ENCODE measurements at regions of chr7 and their contacts with region 1.

Region 1: GRCh38 chr7:120272261-120272660 is 714 bp upstream of the KCND2 start:
- ATAC-seq: peak in 7 of 8 experiments; percentile 26 to 67 (median 47)
- H3K4me3 ChIP-seq: peak overlapping the region; percentile 45 to 65 (median 62)
- H3K27ac ChIP-seq: no peak overlapping the region
- H3K4me1 ChIP-seq: peaks cover 0 to 6% of the 10 kb centered on the region in 2 donors

Region 2: GRCh38 chr7:119270045-119270464 is 1002.2 kb before region 1 on chr7:
- in situ Hi-C with region 1: loop called in 1 of 9 experiments (anchors 25 kb)
- ATAC-seq: peak; percentile 58 to 95 (median 77)
- H3K4me3 ChIP-seq: no peak overlapping the region
- H3K27ac ChIP-seq: no peak overlapping the region
- H3K4me1 ChIP-seq: no peaks in the 10 kb centered on the region

Region 3: GRCh38 chr7:119935418-119936025 is 336.7 kb before region 1 on chr7:
- in situ Hi-C with region 1: loop called in 2 of 9 experiments (anchors 25 kb)
- ATAC-seq: peak in 4 of 8 experiments; percentile 33 to 64 (median 39)
- H3K4me3 ChIP-seq: no peak overlapping the region
- H3K27ac ChIP-seq: no peak overlapping the region
- H3K4me1 ChIP-seq: no peaks in the 10 kb centered on the region

Region 4: GRCh38 chr7:120603366-120603765 is 331.1 kb after region 1 on chr7:
- in situ Hi-C with region 1: no loop called
- ATAC-seq: no peak
- H3K4me3 ChIP-seq: no peak overlapping the region
- H3K27ac ChIP-seq: no peak overlapping the region
- H3K4me1 ChIP-seq: no peaks in the 10 kb centered on the region

Measured in motor neuron (in vitro differentiated cells).